Naive thymus-derived CD4-positive, alpha-beta T cell (primary cell): ENCODE measurements at regions of chr3 and their contacts with region 1.

Region 1: GRCh38 chr3:108662130-108662738 is 72.7 kb downstream of the DZIP3 start:
- DNase-seq: peak in 7 of 9 donors; percentile 53 to 79 (median 74)
- ATAC-seq: peak; percentile 95
- H3K4me3 ChIP-seq: no peak overlapping the region
- H3K4me3 Mint-ChIP-seq: peak overlapping the region in 6 of 10 donors; percentile 0 to 43 (median 15)
- H3K27ac ChIP-seq: no peak overlapping the region
- H3K27ac Mint-ChIP-seq: peak overlapping the region in 2 of 9 donors; percentile 6 to 22
- H3K4me1 ChIP-seq: no peaks in the 10 kb centered on the region
- H3K4me1 Mint-ChIP-seq: peaks cover 0 to 20% (median 17%) of the 10 kb centered on the region in 7 donors
- H3K27me3 ChIP-seq: no peaks in the 10 kb centered on the region
- H3K27me3 Mint-ChIP-seq: peaks cover 0 to 5% (median 0%) of the 10 kb centered on the region in 5 donors

Region 2: GRCh38 chr3:108513961-108514360 is 148.3 kb before region 1 on chr3:
- CTCF ChIA-PET with region 1: no interaction called
- POLR2A ChIA-PET with region 1: no interaction called
- intact Hi-C with region 1: no loop called
- DNase-seq: no peak
- ATAC-seq: no peak
- H3K4me3 ChIP-seq: no peak overlapping the region
- H3K4me3 Mint-ChIP-seq: no peak overlapping the region
- H3K27ac ChIP-seq: no peak overlapping the region
- H3K27ac Mint-ChIP-seq: no peak overlapping the region
- H3K4me1 ChIP-seq: no peaks in the 10 kb centered on the region
- H3K4me1 Mint-ChIP-seq: peaks cover 0 to 4% (median 0%) of the 10 kb centered on the region in 7 donors
- H3K27me3 ChIP-seq: no peaks in the 10 kb centered on the region
- H3K27me3 Mint-ChIP-seq: peaks cover 0 to 10% (median 5%) of the 10 kb centered on the region in 5 donors

Region 3: DNA sequence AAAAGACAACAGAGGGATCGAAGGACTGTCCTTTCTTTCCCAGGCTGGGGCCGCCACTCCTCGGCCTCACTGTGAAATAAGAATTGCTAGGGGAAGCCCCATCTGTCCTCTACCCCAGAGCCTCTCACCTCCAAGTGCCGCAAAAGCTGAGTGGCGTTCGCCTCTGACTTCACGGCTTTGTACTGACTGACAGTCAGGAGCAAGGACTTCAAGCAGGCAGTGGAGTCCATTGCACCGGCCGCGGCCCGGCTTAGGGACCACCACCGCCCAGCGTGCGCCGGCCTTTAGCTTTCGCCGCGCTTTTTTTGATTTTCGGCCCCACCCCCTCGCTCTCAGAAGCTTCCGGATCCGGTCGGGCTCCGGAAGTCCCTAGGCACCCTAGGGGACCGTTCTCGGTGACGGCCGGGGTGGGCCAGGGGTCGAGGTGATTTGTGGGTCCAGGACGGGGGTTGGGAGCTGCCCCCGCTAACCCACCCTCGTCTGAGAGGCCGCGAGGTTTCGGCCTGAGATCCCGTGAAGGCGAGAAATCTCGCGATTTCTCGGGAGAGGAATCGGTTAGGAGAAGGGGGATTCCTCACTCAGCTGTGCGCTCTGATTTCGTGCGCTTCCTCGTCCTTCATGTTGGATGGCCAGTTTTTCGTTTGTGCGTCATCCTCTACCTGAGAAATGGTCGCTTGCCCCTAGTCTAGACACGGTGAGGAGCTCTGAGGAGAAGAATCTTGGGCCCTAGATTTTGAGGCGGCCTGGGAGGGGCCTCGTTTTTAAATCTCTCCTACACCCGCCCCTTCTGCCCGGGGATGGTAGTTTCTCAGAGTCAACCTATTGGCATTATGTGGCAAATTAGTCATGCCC is 72.9 kb before region 1 on chr3 and contains the starts of genes CIP2A and DZIP3:
- CTCF ChIA-PET with region 1: interaction called, 3 read pairs
- POLR2A ChIA-PET with region 1: interaction called, 7 read pairs
- intact Hi-C with region 1: loop called (anchors 1 to 2 kb)
- DNase-seq: peak; percentile 74 to 88 (median 82)
- ATAC-seq: peak; percentile 83
- H3K4me3 ChIP-seq: peak within 1 kb of the TSS; percentile 87
- H3K4me3 Mint-ChIP-seq: peak within 1 kb of the TSS; percentile 94 to 99 (median 98)
- H3K27ac ChIP-seq: peak within 1 kb of the TSS; percentile 92
- H3K27ac Mint-ChIP-seq: peak within 1 kb of the TSS; percentile 95 to 100 (median 99)
- H3K4me1 ChIP-seq: peaks cover 11 to 15% of the 10 kb centered on the region in 2 donors
- H3K4me1 Mint-ChIP-seq: peaks cover 12 to 53% (median 39%) of the 10 kb centered on the region in 7 donors
- H3K27me3 ChIP-seq: no peaks in the 10 kb centered on the region
- H3K27me3 Mint-ChIP-seq: no peaks in the 10 kb centered on the region
- total RNA-seq, gene CIP2A: 3.4 to 44.2 (median 4.1) TPM
- total RNA-seq, gene DZIP3: 9.6 to 17.3 (median 14.6) TPM

Region 4: DNA sequence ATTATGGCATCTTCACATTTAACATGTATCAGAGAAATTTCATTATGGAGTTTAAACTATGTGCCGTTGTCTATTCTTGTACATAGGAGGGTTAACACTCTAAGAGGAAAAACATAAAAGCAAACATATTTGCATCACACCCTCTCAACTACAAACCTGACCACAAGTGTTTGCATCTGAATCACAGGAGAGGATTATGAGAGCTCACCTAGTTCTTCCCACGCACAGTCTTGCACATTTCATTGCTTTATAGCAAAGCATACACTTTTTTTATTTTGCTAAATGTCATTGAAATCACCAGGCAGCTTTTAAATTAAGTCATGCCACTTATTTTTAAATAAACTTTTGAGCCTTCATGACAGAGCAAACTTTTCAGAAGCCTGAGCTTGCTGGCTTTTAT is 172.9 kb after region 1 on chr3:
- CTCF ChIA-PET with region 1: interaction called, 3 read pairs
- POLR2A ChIA-PET with region 1: interaction called, 4 read pairs
- intact Hi-C with region 1: loop called in 1 of 2 experiments (anchors 1 kb)
- DNase-seq: peak in 7 of 9 donors; percentile 60 to 85 (median 75)
- ATAC-seq: peak; percentile 94
- H3K4me3 ChIP-seq: peak overlapping the region; percentile 43
- H3K4me3 Mint-ChIP-seq: peak overlapping the region; percentile 85 to 100 (median 92)
- H3K27ac ChIP-seq: peak overlapping the region; percentile 78
- H3K27ac Mint-ChIP-seq: peak overlapping the region; percentile 83 to 100 (median 94)
- H3K4me1 ChIP-seq: peaks cover 69% of the 10 kb centered on the region in 2 donors
- H3K4me1 Mint-ChIP-seq: peaks cover 42 to 96% (median 88%) of the 10 kb centered on the region in 7 donors
- H3K27me3 ChIP-seq: no peaks in the 10 kb centered on the region
- H3K27me3 Mint-ChIP-seq: no peaks in the 10 kb centered on the region

Region 5: GRCh38 chr3:109023656-109024254 is 361.5 kb after region 1 on chr3:
- CTCF ChIA-PET with region 1: no interaction called
- POLR2A ChIA-PET with region 1: no interaction called
- intact Hi-C with region 1: loop called (anchors 5 to 10 kb)
- DNase-seq: peak in 6 of 9 donors; percentile 2 to 42 (median 32)
- ATAC-seq: peak; percentile 60
- H3K4me3 ChIP-seq: no peak overlapping the region
- H3K4me3 Mint-ChIP-seq: no peak overlapping the region
- H3K27ac ChIP-seq: no peak overlapping the region
- H3K27ac Mint-ChIP-seq: no peak overlapping the region
- H3K4me1 ChIP-seq: no peaks in the 10 kb centered on the region
- H3K4me1 Mint-ChIP-seq: no peaks in the 10 kb centered on the region
- H3K27me3 ChIP-seq: no peaks in the 10 kb centered on the region
- H3K27me3 Mint-ChIP-seq: peaks cover 0 to 18% (median 0%) of the 10 kb centered on the region in 5 donors

Region 6: GRCh38 chr3:109098079-109098644 is 435.9 kb after region 1 on chr3:
- CTCF ChIA-PET with region 1: no interaction called
- POLR2A ChIA-PET with region 1: no interaction called
- intact Hi-C with region 1: loop called in 1 of 2 experiments (anchors 5 kb)
- DNase-seq: no peak
- ATAC-seq: no peak
- H3K4me3 ChIP-seq: no peak overlapping the region
- H3K4me3 Mint-ChIP-seq: no peak overlapping the region
- H3K27ac ChIP-seq: no peak overlapping the region
- H3K27ac Mint-ChIP-seq: no peak overlapping the region
- H3K4me1 ChIP-seq: no peaks in the 10 kb centered on the region
- H3K4me1 Mint-ChIP-seq: peaks cover 0 to 3% (median 0%) of the 10 kb centered on the region in 7 donors
- H3K27me3 ChIP-seq: no peaks in the 10 kb centered on the region
- H3K27me3 Mint-ChIP-seq: peaks cover 0 to 20% (median 0%) of the 10 kb centered on the region in 5 donors

Region 7: GRCh38 chr3:109316162-109316730 is 654.0 kb after region 1 on chr3 and contains the start of gene DPPA2:
- CTCF ChIA-PET with region 1: no interaction called
- POLR2A ChIA-PET with region 1: no interaction called
- intact Hi-C with region 1: no loop called
- DNase-seq: no peak
- ATAC-seq: no peak
- H3K4me3 ChIP-seq: no peak within 1 kb of the TSS
- H3K4me3 Mint-ChIP-seq: no peak within 1 kb of the TSS
- H3K27ac ChIP-seq: no peak within 1 kb of the TSS
- H3K27ac Mint-ChIP-seq: no peak within 1 kb of the TSS
- H3K4me1 ChIP-seq: no peaks in the 10 kb centered on the region
- H3K4me1 Mint-ChIP-seq: no peaks in the 10 kb centered on the region
- H3K27me3 ChIP-seq: no peaks in the 10 kb centered on the region
- H3K27me3 Mint-ChIP-seq: no peaks in the 10 kb centered on the region
- total RNA-seq, gene DPPA2: not detected